Activated T-helper 1 cell treated with anti-CD3 and anti-CD28 coated beads, Interleukin-12 subunit alpha, Interleukin-12 subunit beta, Interleukin-2, Interleukin-4 antibody, amounts not matched to agents 30 ng/mL and 10 ng/mL and 1 ng/mL, durations not matched to agents 14 hours and 24 hours and 36 hours (primary cell): ENCODE measurements at regions of chr16 and their contacts with region 1.

Region 1: DNA sequence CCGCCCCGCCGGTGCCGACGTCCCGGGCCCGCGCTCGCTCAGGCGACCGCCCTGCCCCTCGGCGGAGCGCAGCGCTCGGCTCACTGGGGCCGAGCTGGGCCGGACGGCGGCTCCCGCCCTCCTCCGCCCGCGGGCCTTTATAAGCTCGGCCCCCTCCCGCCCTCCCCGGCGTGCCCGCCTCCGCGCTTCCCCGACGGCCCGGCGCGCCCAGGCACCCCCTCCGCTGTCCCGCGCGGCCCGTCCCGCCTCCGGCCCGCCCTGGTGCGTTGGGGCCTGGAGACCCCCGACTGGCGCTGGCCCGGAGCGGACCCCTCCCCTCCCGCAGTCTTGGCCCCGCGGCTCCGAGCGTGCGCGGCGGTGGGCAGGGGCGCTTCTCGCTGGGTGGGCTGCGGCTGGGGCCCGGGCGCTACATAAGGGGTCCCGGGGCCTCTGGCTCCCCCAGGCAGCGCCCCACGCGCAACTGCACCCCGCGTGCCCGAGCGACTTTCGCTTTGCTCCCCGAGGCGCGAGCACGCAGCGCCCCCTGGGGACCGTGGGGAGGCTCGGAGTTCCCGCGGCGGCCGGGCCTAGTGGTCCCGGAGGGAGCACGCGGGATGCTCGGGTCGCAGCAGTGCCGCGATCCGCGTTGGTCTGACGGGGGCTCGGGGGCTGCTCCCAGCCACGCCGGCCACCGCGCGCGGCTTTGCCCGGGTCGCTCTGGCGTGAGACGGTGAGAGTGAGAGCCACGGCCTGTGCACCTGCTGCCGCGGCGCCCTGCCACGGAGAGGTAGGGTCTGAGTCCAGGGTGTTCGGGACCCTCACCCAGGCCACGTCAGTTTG is at the start of gene PIEZO1:
- DNase-seq: peak; percentile 80
- H3K4me3 Mint-ChIP-seq: peak within 1 kb of the TSS; percentile 82
- H3K27ac Mint-ChIP-seq: peak within 1 kb of the TSS; percentile 87
- H3K4me1 Mint-ChIP-seq: peaks cover 43% of the 10 kb centered on the region
- H3K27me3 Mint-ChIP-seq: peaks cover 4% of the 10 kb centered on the region
- total RNA-seq, gene PIEZO1: 214 and 217 TPM in 2 replicates

Region 2: DNA sequence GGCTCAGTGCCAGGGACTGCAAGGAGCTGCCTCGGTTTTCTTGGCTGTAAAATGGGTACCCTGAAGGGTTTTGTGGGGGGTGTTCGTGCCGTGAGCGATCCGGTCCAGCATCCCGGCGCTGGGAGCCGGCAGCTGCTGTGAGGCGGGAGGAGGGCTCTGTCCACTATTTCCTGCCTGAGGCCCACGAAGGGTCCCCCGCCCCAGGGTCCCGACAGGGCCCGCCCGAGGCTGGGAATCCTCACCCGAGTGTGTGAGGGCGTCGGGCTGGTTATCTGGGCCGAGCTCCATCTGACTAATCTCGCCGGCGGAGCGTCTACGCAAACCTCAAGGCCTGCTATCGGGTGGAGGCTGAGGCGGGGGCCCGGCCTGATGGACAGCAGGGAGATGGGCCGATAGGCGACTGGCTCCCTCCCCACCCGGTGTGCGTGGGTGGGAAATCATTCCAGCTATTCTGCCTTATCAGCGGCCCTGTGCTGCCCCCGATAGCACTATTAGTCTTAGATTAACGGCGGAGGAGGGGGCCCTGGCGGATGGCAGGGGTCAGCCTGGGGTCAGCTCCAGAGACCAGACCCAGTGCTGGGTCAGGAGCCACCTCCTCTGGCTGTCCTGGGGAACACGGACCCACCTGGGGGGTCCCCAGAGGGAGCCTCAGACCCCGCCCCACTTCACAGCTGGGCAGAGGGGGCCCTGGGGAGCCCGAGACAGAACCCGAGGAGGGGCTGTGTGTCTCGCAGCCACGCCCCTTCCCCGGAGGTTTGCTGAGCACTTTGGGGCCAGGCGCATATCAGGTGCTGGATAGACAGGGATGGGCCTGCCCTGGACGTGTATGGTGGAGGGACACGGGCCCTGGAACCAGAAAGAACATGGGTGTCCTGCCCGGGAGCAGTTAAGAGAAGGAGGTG is 287.5 kb before region 1 on chr16:
- intact Hi-C with region 1: no loop called
- DNase-seq: no peak
- H3K4me3 Mint-ChIP-seq: no peak overlapping the region
- H3K27ac Mint-ChIP-seq: no peak overlapping the region
- H3K4me1 Mint-ChIP-seq: no peaks in the 10 kb centered on the region
- H3K27me3 Mint-ChIP-seq: no peaks in the 10 kb centered on the region

Region 3: GRCh38 chr16:88686439-88687253 is 98.7 kb before region 1 on chr16 and contains the start of gene SNAI3:
- intact Hi-C with region 1: no loop called
- DNase-seq: peak; percentile 87
- H3K4me3 Mint-ChIP-seq: peak within 1 kb of the TSS; percentile 80
- H3K27ac Mint-ChIP-seq: no peak within 1 kb of the TSS
- H3K4me1 Mint-ChIP-seq: peaks cover 46% of the 10 kb centered on the region
- H3K27me3 Mint-ChIP-seq: peaks cover 3% of the 10 kb centered on the region
- total RNA-seq, gene SNAI3: 1.8 and 2.4 TPM in 2 replicates

Region 4: GRCh38 chr16:88706288-88706964 is 78.9 kb before region 1 on chr16 and contains the starts of genes CTU2 and RNF166:
- intact Hi-C with region 1: loop called (anchors 2 kb)
- DNase-seq: peak; percentile 92
- H3K4me3 Mint-ChIP-seq: peak within 1 kb of the TSS; percentile 89
- H3K27ac Mint-ChIP-seq: peak within 1 kb of the TSS; percentile 86
- H3K4me1 Mint-ChIP-seq: peaks cover 47% of the 10 kb centered on the region
- H3K27me3 Mint-ChIP-seq: no peaks in the 10 kb centered on the region
- total RNA-seq, gene CTU2: 66.3 and 74.7 TPM in 2 replicates
- total RNA-seq, gene RNF166: 42.4 and 45.0 TPM in 2 replicates

Region 5: DNA sequence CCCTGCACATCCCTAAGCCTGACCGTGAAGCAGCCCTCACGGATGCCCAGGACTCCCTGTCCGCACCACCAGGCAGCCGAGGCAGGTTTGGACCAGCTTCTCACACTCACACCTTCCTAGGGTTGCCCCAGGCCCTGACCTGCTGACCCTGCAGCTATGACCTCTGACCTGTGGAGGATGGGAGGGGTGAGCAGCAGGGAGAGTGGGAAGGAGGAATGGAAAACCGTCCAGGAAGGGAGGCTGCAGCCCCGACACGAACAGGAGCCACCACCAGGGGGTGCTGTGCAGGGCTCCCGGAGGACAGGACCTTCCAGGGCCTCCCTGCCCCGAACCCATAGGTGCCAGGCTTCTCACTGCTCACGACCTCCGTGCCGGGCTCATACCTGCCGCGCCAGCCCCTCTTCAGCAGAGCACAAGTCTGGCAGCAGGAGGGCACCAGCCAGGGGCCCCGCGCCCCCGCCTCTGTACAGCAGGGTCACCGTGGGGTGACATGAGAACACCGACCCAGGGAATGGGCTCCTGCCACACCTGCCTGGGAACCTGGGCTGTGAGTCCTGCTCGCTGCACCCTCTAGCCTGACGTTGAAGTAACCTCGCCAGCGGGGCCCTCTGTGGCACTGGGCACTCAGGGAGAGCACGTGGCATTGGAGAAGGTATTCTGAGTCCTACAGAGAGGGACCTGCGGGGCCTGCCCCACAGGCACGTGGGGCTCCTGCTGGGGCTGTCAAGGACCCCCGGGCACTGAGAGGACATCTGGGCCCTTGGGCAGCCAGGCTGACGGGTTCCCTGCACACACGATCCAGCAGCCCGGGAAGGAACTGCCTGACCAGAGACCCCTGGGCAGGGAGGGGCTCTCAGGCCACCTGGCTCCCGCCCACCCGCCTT is 41.4 kb before region 1 on chr16:
- intact Hi-C with region 1: loop called (anchors 1 kb)
- DNase-seq: peak; percentile 47
- H3K4me3 Mint-ChIP-seq: no peak overlapping the region
- H3K27ac Mint-ChIP-seq: no peak overlapping the region
- H3K4me1 Mint-ChIP-seq: peaks cover 10% of the 10 kb centered on the region
- H3K27me3 Mint-ChIP-seq: no peaks in the 10 kb centered on the region

Region 6: GRCh38 chr16:88811769-88812512 is 26.6 kb after region 1 on chr16 and contains the start of gene APRT:
- intact Hi-C with region 1: loop called (anchors 2 kb)
- DNase-seq: peak; percentile 97
- H3K4me3 Mint-ChIP-seq: peak within 1 kb of the TSS; percentile 90
- H3K27ac Mint-ChIP-seq: peak within 1 kb of the TSS; percentile 98
- H3K4me1 Mint-ChIP-seq: peaks cover 11% of the 10 kb centered on the region
- H3K27me3 Mint-ChIP-seq: no peaks in the 10 kb centered on the region
- total RNA-seq, gene APRT: 301 and 303 TPM in 2 replicates